Astrocyte of the cerebellum (primary cell): ENCODE measurements at regions of chr14 and their contacts with region 1.

Region 1: DNA sequence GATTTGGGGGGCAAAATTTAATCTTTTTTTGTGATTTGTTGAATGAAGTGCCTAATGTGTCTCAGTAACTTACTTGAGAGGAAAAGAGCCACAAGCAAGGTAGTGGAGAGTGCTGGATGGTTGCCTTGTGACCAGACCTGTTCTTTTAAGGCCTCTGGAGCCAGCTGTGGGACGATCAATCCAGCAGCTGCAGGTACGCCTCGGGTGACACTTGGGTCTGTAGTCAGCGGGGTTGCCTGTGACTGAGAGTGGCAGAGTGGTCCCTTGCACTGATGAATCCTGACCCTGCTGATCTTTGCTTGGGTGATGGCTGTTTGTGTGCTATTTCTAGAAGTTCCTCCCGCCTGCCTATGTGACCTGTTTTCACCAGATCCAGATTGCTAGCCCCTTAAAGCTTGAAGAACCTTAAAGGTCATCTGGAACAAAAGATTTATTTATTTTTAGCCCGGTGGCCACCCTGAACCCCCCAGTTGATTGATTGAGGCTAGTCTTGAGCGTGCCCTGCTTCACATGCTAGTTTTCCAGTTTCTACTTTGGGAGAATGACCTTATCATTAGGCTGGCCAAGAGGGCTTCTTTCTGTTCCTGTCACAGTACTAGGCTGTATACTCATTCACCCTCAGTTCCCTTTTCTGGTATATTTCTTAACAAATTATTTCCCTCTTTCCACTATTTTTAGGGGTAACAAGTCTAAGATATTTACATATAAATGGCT is 23.2 kb downstream of the PRKCH start:
- DNase-seq: no peak
- H3K4me3 ChIP-seq: no peak overlapping the region
- CTCF ChIP-seq: no peak

Region 2: DNA sequence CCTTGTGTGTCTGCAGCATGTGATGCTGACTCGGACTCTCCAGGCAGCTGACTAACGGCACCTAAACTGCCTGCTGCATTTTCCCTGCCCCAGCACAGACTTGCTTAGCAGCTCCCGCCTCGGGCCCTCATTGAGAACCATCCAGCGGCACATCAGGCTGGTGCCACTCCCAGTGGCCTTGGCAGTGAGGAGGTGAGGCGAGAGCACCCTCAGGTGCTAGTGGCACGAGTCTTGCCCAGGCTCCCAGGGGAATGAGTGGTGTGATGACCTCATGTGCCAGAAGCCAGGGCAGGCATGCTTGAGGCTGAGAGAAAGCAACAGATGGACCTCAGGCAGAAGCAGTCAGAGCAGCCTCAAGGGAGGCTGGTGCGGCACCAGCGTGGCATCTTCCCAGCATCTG is 37.0 kb after region 1 on chr14:
- in situ Hi-C with region 1: loop called (anchors 5 kb)
- DNase-seq: no peak
- H3K4me3 ChIP-seq: no peak overlapping the region
- CTCF ChIP-seq: no peak

Region 3: GRCh38 chr14:61420326-61420725 is 75.7 kb after region 1 on chr14:
- in situ Hi-C with region 1: no loop called
- DNase-seq: peak; percentile 1
- H3K4me3 ChIP-seq: no peak overlapping the region
- CTCF ChIP-seq: no peak